ENCODE measurements at regions of chr15 and their contacts with region 1.

Region 1: DNA sequence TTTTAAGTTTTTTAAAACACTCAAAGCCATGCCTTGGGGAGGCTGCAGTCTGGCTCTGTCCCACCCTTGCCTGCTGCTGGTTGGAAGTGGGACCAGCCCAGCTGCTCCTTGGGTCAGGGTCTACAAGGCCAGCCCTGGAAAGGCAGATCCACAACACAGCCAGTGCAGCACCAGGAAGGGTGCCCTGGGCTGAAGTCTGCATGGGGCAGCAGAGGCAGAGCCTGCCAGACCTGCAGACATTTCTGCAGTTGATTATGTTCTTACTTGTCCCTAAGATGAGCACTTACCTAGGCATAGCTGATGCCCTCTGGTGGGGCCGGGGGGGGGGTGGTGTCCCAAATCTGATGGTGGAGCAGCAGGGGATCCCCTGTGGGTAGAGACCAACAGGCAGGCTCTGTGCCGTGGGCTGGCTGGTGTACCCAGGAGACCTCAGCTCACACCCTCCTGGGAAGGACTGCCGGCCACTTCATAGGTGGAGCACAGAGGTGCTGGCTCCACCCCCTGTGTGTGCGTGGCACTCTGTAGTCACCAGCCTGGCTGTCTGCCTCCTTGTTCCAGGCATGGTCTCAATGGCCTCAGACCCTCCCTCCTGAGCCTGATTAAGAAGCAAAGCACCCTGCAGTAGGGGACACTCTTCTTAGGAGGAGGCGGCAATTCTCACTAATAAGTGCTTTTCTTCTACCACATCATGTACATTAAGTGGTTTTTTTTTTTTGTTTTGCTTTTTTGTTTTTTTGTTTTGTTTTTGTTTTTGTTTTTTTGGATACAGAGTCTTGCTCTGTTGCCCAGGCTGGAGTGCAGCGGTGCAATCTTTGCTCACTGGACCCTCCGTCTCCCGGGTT is 97.4 kb upstream of the KLF13 start:
- DNase-seq: peak; percentile 91
- H3K4me3 ChIP-seq: peak overlapping the region; percentile 77
- H3K27ac ChIP-seq: peak overlapping the region; percentile 99
- H3K4me1 ChIP-seq: peaks cover 94% of the 10 kb centered on the region
- CTCF ChIP-seq: no peak

Region 2: GRCh38 chr15:31306426-31307269 is 77.4 kb after region 1 on chr15:
- CTCF ChIA-PET with region 1: interaction called, 4 read pairs
- POLR2A ChIA-PET with region 1: interaction called, 9 read pairs
- intact Hi-C with region 1: loop called (anchors 2 kb)
- DNase-seq: peak; percentile 87
- H3K4me3 ChIP-seq: peak overlapping the region; percentile 56
- H3K27ac ChIP-seq: peak overlapping the region; percentile 87
- H3K4me1 ChIP-seq: peaks cover 90% of the 10 kb centered on the region
- CTCF ChIP-seq: no peak